ENCODE measurements at regions of chr5 and their contacts with region 1.

Region 1: DNA sequence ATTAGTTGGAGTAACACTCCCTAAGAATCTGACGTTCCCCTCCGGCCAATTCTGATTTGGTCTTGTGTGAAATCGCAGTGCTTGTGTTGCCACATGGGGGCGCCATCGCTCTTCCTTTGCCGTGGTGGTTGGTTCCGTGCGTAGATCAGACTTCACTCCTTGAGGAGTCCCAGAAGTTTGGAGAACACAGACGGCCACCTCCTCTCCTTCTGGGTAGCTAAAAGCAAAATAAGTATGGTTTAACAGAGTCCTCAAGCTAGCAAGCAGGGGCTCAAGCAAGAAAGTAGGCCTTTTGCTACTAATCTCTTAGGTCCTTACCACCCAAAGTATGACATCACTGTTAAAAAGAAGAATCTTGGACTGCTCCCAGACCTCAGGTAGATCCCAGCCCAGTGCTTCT is 59.5 kb downstream of the HSPA4 start:
- DNase-seq: peak; percentile 72 to 76 (median 74)
- H3K4me3 ChIP-seq: no peak overlapping the region
- H3K4me3 Mint-ChIP-seq: peak overlapping the region in 4 of 8 donors; percentile 2 to 77 (median 4)
- H3K27ac ChIP-seq: no peak overlapping the region
- H3K27ac Mint-ChIP-seq: peak overlapping the region in 2 of 7 donors; percentile 80 to 84
- H3K4me1 ChIP-seq: peaks cover 17% of the 10 kb centered on the region
- H3K4me1 Mint-ChIP-seq: peaks cover 21 to 27% (median 22%) of the 10 kb centered on the region in 4 donors
- H3K27me3 ChIP-seq: no peaks in the 10 kb centered on the region
- H3K27me3 Mint-ChIP-seq: no peaks in the 10 kb centered on the region

Region 2: GRCh38 chr5:133219296-133219695 is 108.0 kb after region 1 on chr5:
- CTCF ChIA-PET with region 1: interaction called, 48 read pairs
- POLR2A ChIA-PET with region 1: no interaction called
- intact Hi-C with region 1: loop called (anchors 1 kb)
- DNase-seq: no peak
- H3K4me3 ChIP-seq: no peak overlapping the region
- H3K4me3 Mint-ChIP-seq: no peak overlapping the region
- H3K27ac ChIP-seq: no peak overlapping the region
- H3K27ac Mint-ChIP-seq: no peak overlapping the region
- H3K4me1 ChIP-seq: no peaks in the 10 kb centered on the region
- H3K4me1 Mint-ChIP-seq: peaks cover 0 to 1% (median 0%) of the 10 kb centered on the region in 4 donors
- H3K27me3 ChIP-seq: no peaks in the 10 kb centered on the region
- H3K27me3 Mint-ChIP-seq: peaks cover 2 to 3% of the 10 kb centered on the region in 2 donors

Region 3: DNA sequence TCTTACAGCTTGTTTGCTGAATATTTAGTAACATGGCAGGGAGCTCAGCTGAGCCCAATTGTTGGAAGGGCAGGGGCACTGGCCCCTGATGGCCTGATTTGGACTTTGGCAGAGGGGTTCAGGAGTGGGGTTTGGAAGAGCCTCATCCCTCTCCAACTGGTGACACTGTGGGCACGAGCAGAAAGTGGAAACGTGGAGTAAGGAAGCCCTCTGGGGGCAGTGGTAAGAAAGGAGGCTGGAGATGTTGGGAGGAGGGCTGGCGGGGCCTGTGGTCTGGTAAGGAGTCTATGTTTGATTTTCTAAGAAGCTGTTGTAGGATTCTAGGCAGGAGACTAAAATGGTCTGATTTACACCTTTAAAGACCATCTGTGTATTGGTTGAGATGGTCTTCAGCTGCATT is 149.4 kb after region 1 on chr5:
- CTCF ChIA-PET with region 1: interaction called, 4 read pairs
- POLR2A ChIA-PET with region 1: no interaction called
- intact Hi-C with region 1: loop called (anchors 1 kb)
- DNase-seq: no peak
- H3K4me3 ChIP-seq: no peak overlapping the region
- H3K4me3 Mint-ChIP-seq: no peak overlapping the region
- H3K27ac ChIP-seq: no peak overlapping the region
- H3K27ac Mint-ChIP-seq: peak overlapping the region in 1 of 7 donors; percentile 60
- H3K4me1 ChIP-seq: no peaks in the 10 kb centered on the region
- H3K4me1 Mint-ChIP-seq: peaks cover 6 to 17% (median 9%) of the 10 kb centered on the region in 4 donors
- H3K27me3 ChIP-seq: no peaks in the 10 kb centered on the region
- H3K27me3 Mint-ChIP-seq: peaks cover 0 to 3% of the 10 kb centered on the region in 2 donors

Region 4: GRCh38 chr5:133347039-133347438 is 235.7 kb after region 1 on chr5:
- CTCF ChIA-PET with region 1: interaction called, 3 read pairs
- POLR2A ChIA-PET with region 1: no interaction called
- intact Hi-C with region 1: loop called (anchors 1 kb)
- DNase-seq: peak in 1 of 5 donors; percentile 11
- H3K4me3 ChIP-seq: no peak overlapping the region
- H3K4me3 Mint-ChIP-seq: no peak overlapping the region
- H3K27ac ChIP-seq: no peak overlapping the region
- H3K27ac Mint-ChIP-seq: no peak overlapping the region
- H3K4me1 ChIP-seq: no peaks in the 10 kb centered on the region
- H3K4me1 Mint-ChIP-seq: no peaks in the 10 kb centered on the region
- H3K27me3 ChIP-seq: peaks cover 3% of the 10 kb centered on the region
- H3K27me3 Mint-ChIP-seq: peaks cover 5 to 23% of the 10 kb centered on the region in 2 donors

Region 5: GRCh38 chr5:133868946-133869518 is 757.7 kb after region 1 on chr5:
- CTCF ChIA-PET with region 1: interaction called, 13 read pairs
- POLR2A ChIA-PET with region 1: no interaction called
- intact Hi-C with region 1: no loop called
- DNase-seq: peak; percentile 46 to 58 (median 51)
- H3K4me3 ChIP-seq: no peak overlapping the region
- H3K4me3 Mint-ChIP-seq: peak overlapping the region in 1 of 8 donors; percentile 30
- H3K27ac ChIP-seq: no peak overlapping the region
- H3K27ac Mint-ChIP-seq: no peak overlapping the region
- H3K4me1 ChIP-seq: no peaks in the 10 kb centered on the region
- H3K4me1 Mint-ChIP-seq: peaks cover 0 to 3% (median under 1%) of the 10 kb centered on the region in 4 donors
- H3K27me3 ChIP-seq: no peaks in the 10 kb centered on the region
- H3K27me3 Mint-ChIP-seq: peaks cover 5 to 16% of the 10 kb centered on the region in 2 donors

Measured in CD4-positive, alpha-beta memory T cell (primary cell).